Aorta (tissue), 5 donors: ENCODE measurements at regions of chr5 and their contacts with region 1.

Region 1: DNA sequence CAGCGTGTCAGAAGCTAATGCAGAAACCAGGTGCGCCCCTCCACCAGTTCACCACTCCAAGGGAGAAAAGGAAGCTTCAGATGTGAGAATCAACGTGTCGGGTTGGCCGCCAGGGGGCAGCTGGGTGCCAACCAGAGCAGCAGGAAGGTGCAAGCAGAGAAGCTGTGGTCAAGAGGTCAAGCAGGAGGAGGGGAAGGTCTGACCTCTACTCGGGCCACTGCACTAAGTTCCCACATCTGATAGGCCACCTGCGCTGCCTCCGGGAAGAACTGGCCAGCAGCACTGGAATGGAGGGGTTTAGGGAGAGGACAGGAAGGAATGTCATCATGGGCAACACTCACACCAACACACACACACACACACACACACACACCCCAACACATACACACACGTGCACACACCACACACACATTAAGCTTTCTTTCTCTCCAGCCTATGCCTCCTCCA is 31.4 kb downstream of the ANXA6 start:
- DNase-seq: peak; percentile 87 to 89
- ATAC-seq: peak; percentile 67
- H3K4me3 ChIP-seq: no peak overlapping the region
- H3K27ac ChIP-seq: peak overlapping the region in 1 of 2 donors; percentile 16
- H3K4me1 ChIP-seq: no peaks in the 10 kb centered on the region
- H3K27me3 ChIP-seq: no peaks in the 10 kb centered on the region

Region 2: GRCh38 chr5:150778517-150779396 is 347.5 kb before region 1 on chr5 and contains the start of gene SMIM3:
- intact Hi-C with region 1: no loop called
- DNase-seq: peak; percentile 91 to 95
- ATAC-seq: peak; percentile 89
- H3K4me3 ChIP-seq: peak within 1 kb of the TSS; percentile 46 to 96
- H3K27ac ChIP-seq: peak within 1 kb of the TSS; percentile 80 to 90
- H3K4me1 ChIP-seq: peaks cover 6 to 10% of the 10 kb centered on the region in 2 donors
- H3K27me3 ChIP-seq: no peaks in the 10 kb centered on the region
- total RNA-seq, gene SMIM3: 45.3 to 47.6 TPM

Region 3: DNA sequence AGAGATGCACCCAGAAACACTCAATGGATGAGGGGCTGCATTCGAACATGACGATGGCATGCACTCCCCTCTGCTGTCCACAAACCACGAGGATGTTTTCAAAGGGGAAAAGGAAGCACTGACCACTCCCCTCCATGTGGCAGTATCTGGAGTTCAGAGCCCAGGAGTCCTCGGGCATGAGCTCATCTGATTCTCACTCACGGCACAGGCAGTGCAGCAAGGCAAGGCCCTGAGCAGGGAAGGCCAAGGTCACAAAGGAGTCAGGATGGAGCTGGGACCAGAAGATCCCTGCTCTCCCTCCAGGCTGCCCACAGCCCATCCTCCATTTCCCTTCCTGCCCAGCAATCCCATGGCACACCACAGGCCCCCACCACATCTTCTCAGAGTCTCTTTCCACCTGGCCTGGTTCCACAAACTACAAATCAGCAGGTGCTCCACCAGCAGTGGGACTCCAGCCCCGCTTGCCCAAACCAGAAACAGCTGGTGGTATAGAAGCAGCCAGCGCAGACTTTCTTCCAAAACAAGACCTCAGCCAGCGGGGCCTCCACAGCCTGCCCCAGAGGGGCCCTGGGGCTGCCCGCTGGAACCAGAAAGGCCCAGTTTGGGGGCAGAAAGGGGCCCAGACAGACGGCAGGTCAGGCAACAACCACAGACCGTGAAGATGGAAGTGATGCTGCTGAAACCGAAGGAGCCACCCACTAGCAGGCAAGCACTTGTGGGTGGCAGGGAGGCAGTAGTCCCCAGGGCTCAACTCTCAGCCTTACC is 57.6 kb before region 1 on chr5:
- intact Hi-C with region 1: no loop called
- DNase-seq: no peak
- ATAC-seq: peak; percentile 34
- H3K4me3 ChIP-seq: no peak overlapping the region
- H3K27ac ChIP-seq: peak overlapping the region in 1 of 2 donors; percentile 28
- H3K4me1 ChIP-seq: no peaks in the 10 kb centered on the region
- H3K27me3 ChIP-seq: no peaks in the 10 kb centered on the region

Region 4: GRCh38 chr5:151239237-151239861 is 113.1 kb after region 1 on chr5:
- intact Hi-C with region 1: loop called (anchors 5 kb)
- DNase-seq: peak; percentile 86 to 94
- ATAC-seq: peak; percentile 83
- H3K4me3 ChIP-seq: no peak overlapping the region
- H3K27ac ChIP-seq: no peak overlapping the region
- H3K4me1 ChIP-seq: no peaks in the 10 kb centered on the region
- H3K27me3 ChIP-seq: no peaks in the 10 kb centered on the region

Region 5: GRCh38 chr5:152389208-152389849 is 1263.1 kb after region 1 on chr5:
- intact Hi-C with region 1: no loop called
- DNase-seq: no peak
- ATAC-seq: no peak
- H3K4me3 ChIP-seq: no peak overlapping the region
- H3K27ac ChIP-seq: no peak overlapping the region
- H3K4me1 ChIP-seq: no peaks in the 10 kb centered on the region
- H3K27me3 ChIP-seq: no peaks in the 10 kb centered on the region